Activated CD4-positive, alpha-beta T cell treated with anti-CD3 and anti-CD28 coated beads for 36 hours (primary cell): ENCODE measurements at regions of chr15 and their contacts with region 1.

Region 1: GRCh38 chr15:58182460-58183163 is 44.4 kb downstream of the AQP9 start:
- DNase-seq: peak; percentile 63
- ATAC-seq: peak; percentile 65
- H3K4me3 Mint-ChIP-seq: no peak overlapping the region
- H3K27ac Mint-ChIP-seq: no peak overlapping the region
- H3K4me1 Mint-ChIP-seq: peaks cover 6% of the 10 kb centered on the region
- H3K27me3 Mint-ChIP-seq: peaks cover 23% of the 10 kb centered on the region

Region 2: GRCh38 chr15:57561041-57561711 is 621.4 kb before region 1 on chr15:
- CTCF ChIA-PET with region 1: no interaction called
- POLR2A ChIA-PET with region 1: no interaction called
- intact Hi-C with region 1: loop called in 1 of 2 experiments (anchors 2 kb)
- DNase-seq: peak; percentile 74
- ATAC-seq: peak; percentile 83
- H3K4me3 Mint-ChIP-seq: peak overlapping the region; percentile 17
- H3K27ac Mint-ChIP-seq: peak overlapping the region; percentile 89
- H3K4me1 Mint-ChIP-seq: peaks cover 37% of the 10 kb centered on the region
- H3K27me3 Mint-ChIP-seq: no peaks in the 10 kb centered on the region

Region 3: GRCh38 chr15:57866149-57866736 is 316.4 kb before region 1 on chr15:
- CTCF ChIA-PET with region 1: interaction called, 6 read pairs
- POLR2A ChIA-PET with region 1: no interaction called
- intact Hi-C with region 1: loop called (anchors 2 kb)
- DNase-seq: peak; percentile 75
- ATAC-seq: no peak
- H3K4me3 Mint-ChIP-seq: no peak overlapping the region
- H3K27ac Mint-ChIP-seq: no peak overlapping the region
- H3K4me1 Mint-ChIP-seq: peaks cover 3% of the 10 kb centered on the region
- H3K27me3 Mint-ChIP-seq: peaks cover 24% of the 10 kb centered on the region

Region 4: GRCh38 chr15:58043192-58043903 is 139.3 kb before region 1 on chr15:
- CTCF ChIA-PET with region 1: interaction called, 3 read pairs
- POLR2A ChIA-PET with region 1: no interaction called
- intact Hi-C with region 1: loop called (anchors 1 kb)
- DNase-seq: peak; percentile 64
- ATAC-seq: no peak
- H3K4me3 Mint-ChIP-seq: no peak overlapping the region
- H3K27ac Mint-ChIP-seq: no peak overlapping the region
- H3K4me1 Mint-ChIP-seq: peaks cover 3% of the 10 kb centered on the region
- H3K27me3 Mint-ChIP-seq: peaks cover 27% of the 10 kb centered on the region

Region 5: GRCh38 chr15:58064980-58065444 is 117.6 kb before region 1 on chr15:
- CTCF ChIA-PET with region 1: interaction called, 19 read pairs
- POLR2A ChIA-PET with region 1: no interaction called
- intact Hi-C with region 1: loop called in 1 of 2 experiments (anchors 5 kb)
- DNase-seq: peak; percentile 7
- ATAC-seq: no peak
- H3K4me3 Mint-ChIP-seq: peak overlapping the region; percentile 21
- H3K27ac Mint-ChIP-seq: no peak overlapping the region
- H3K4me1 Mint-ChIP-seq: peaks cover 3% of the 10 kb centered on the region
- H3K27me3 Mint-ChIP-seq: peaks cover 42% of the 10 kb centered on the region

Region 6: GRCh38 chr15:58077427-58077826 is 105.2 kb before region 1 on chr15:
- CTCF ChIA-PET with region 1: no interaction called
- POLR2A ChIA-PET with region 1: no interaction called
- intact Hi-C with region 1: loop called (anchors 2 to 5 kb)
- DNase-seq: no peak
- ATAC-seq: no peak
- H3K4me3 Mint-ChIP-seq: no peak overlapping the region
- H3K27ac Mint-ChIP-seq: no peak overlapping the region
- H3K4me1 Mint-ChIP-seq: no peaks in the 10 kb centered on the region
- H3K27me3 Mint-ChIP-seq: peaks cover 19% of the 10 kb centered on the region

Region 7: DNA sequence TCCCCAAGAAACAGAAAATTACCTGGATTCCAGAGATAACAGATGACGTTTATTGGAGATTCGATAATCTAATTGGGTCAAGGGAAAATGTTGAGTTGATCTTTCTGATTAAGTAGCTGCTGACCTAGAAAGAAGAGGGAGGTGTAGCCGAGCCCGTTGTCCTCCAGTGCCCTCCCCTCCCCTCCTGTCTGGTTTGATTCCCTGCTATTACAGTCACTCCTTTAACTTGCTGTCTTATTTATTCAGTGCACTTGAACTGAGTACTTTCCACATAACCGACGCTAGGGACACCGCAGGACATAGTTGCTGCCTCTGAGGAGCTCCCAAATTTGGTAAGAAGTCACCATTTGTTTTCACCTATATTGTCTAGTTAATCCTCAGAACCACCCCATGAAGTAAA is 59.3 kb after region 1 on chr15:
- CTCF ChIA-PET with region 1: no interaction called
- POLR2A ChIA-PET with region 1: no interaction called
- intact Hi-C with region 1: no loop called
- DNase-seq: no peak
- ATAC-seq: no peak
- H3K4me3 Mint-ChIP-seq: no peak overlapping the region
- H3K27ac Mint-ChIP-seq: no peak overlapping the region
- H3K4me1 Mint-ChIP-seq: no peaks in the 10 kb centered on the region
- H3K27me3 Mint-ChIP-seq: no peaks in the 10 kb centered on the region

Region 8: DNA sequence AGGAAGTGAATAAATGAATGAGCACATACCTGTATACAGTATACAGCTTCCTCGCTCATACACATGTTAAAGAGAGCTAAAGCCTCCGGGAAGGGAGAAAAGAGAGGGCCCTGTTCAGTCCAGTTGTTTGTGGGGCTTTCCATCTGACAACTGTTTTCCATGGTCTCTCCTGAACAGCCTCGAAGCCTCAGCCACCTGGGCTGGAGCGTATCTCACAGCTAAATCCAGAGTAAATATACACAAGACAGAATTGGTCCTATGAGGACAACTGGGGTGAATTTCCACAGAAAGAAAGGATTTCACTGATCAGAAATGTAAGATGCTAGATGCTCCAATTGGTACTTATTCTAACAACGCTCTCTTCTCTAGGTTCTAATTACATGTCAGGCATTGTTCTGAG is 352.7 kb after region 1 on chr15:
- CTCF ChIA-PET with region 1: no interaction called
- POLR2A ChIA-PET with region 1: interaction called, 12 read pairs
- intact Hi-C with region 1: no loop called
- DNase-seq: no peak
- ATAC-seq: no peak
- H3K4me3 Mint-ChIP-seq: no peak overlapping the region
- H3K27ac Mint-ChIP-seq: no peak overlapping the region
- H3K4me1 Mint-ChIP-seq: no peaks in the 10 kb centered on the region
- H3K27me3 Mint-ChIP-seq: no peaks in the 10 kb centered on the region